Psoas muscle (tissue), 8 donors: ENCODE measurements at regions of chr9 and their contacts with region 1.

Region 1: DNA sequence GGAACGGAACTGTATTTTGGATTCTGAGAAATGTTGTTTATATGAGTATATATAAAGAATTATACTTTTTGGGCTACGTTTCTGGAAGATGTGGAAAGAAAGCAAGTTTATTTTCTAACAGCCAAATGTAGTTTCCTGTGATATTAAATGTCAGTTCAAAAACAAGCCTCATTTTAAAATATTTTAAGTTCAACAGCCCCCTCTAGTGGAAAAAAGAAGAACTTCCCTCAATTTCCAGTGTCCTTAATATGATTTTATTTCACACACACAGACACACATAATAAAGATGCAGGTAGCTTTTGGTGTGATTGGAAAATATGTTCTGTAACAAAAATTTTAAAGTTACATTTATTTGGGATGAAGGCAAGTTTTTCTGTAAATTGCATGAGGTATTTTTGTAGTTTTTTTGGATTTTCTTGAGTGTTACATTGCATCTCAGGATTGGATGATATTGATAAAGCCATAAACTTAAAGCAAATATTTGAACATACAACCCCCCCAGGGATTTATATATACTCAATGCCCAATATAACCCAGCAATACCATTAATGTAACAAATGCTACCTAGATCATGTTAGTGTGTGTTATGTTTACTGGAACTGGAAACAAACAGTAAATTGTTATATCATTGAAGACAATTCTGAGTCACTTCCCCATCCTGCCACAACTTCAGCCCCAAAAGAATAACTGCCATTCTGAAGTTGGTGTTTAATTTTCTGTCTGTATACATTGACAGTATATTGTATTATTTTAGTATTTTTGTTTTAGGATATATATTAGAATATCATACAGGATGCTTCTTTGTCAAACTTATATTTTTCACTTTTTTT is 54.0 kb downstream of the CCDC171 start:
- DNase-seq: no peak
- ATAC-seq: peak in 2 of 4 donors; percentile 40 to 70
- H3K4me3 ChIP-seq: no peak overlapping the region
- H3K27ac ChIP-seq: no peak overlapping the region
- H3K4me1 ChIP-seq: no peaks in the 10 kb centered on the region
- H3K27me3 ChIP-seq: no peaks in the 10 kb centered on the region
- CTCF ChIP-seq: peak; percentile 83

Region 2: DNA sequence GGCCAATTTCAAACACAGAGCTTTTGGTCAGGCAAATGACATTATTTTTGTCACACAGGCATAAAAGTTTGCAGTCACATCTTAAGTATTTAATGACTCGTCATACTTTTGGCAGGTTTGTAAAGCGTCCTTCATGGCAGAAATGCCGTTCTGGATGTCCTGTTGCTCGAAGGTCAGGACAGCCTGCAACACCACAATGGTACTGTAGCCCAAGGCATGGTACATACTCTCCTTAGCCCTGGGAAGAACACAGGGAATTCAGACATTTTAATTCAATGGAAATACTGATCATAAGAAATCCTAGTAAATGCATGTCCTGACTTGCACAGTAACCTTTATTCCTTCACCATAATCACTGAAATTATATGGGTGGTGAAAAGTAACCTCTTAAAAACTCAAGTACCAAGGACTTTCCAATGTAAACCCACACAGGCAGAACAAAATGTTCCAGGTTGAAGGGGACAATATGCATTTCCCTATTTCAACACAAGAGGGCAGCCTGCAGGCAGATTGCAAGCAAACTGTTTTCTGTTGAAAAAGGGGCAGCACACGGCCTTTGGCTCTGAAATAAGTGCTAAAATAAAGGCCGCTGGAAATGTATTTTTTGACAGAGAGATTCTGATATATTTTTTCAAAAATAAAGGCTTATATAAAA is 395.6 kb before region 1 on chr9:
- intact Hi-C with region 1: loop called (anchors 5 kb)
- DNase-seq: no peak
- ATAC-seq: peak; percentile 57 to 81 (median 60)
- H3K4me3 ChIP-seq: peak overlapping the region; percentile 12
- H3K27ac ChIP-seq: no peak overlapping the region
- H3K4me1 ChIP-seq: no peaks in the 10 kb centered on the region
- H3K27me3 ChIP-seq: no peaks in the 10 kb centered on the region
- CTCF ChIP-seq: peak; percentile 86

Region 3: DNA sequence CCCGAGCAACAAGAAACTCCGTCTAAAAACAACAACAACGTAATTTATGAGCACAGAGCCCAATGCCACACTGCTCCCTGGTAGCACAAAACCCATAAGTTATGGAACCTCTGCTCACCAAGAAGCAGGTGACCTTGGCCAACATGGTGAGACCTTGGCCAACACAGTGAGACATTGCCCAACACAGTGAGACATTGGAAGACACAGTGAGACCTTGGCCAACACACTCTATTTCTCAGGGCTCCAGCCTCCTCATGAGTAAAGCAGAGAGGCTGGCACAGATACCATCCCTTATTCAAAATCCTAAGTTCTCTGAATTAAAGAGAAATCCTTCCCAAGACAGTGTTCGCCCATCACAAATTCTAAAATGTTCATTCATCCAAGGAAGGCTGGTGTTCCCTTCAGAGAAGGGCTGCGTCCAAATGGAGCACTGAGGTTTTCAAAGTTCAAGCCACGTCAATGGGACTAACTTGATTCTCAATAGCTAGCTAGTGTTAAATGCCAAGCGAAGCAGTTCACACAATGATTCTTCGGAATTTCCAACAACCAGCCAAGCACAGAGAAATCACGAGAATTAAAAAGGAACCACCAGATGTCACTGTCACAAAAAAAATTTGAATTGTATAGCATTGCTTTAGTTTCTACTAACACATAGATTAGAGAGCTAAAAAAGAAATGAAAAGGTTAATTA is 329.3 kb before region 1 on chr9:
- intact Hi-C with region 1: loop called (anchors 5 to 10 kb)
- DNase-seq: no peak
- ATAC-seq: peak in 2 of 4 donors; percentile 13 to 70
- H3K4me3 ChIP-seq: no peak overlapping the region
- H3K27ac ChIP-seq: no peak overlapping the region
- H3K4me1 ChIP-seq: no peaks in the 10 kb centered on the region
- H3K27me3 ChIP-seq: no peaks in the 10 kb centered on the region
- CTCF ChIP-seq: peak; percentile 44

Region 4: DNA sequence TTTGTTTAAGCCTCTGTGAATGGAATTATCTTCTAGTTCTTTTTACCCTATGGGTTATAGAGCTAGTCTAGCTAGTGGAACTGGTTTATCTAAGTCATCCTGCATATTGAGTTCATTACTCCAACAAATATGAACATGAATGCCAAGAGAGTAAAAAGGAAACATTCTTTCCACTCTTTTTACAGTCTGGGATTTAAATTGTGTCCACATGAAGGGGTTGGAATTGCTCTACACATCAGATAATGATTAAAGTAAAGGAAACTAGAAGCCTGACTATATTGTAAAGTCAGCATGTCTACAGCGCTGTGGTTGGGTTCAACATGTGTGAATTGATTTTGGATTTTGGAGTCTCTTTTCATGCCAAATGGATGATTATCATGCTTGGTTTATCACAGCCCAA is 119.1 kb after region 1 on chr9:
- intact Hi-C with region 1: no loop called
- DNase-seq: no peak
- ATAC-seq: no peak
- H3K4me3 ChIP-seq: no peak overlapping the region
- H3K27ac ChIP-seq: no peak overlapping the region
- H3K4me1 ChIP-seq: no peaks in the 10 kb centered on the region
- H3K27me3 ChIP-seq: no peaks in the 10 kb centered on the region
- CTCF ChIP-seq: no peak

Region 5: GRCh38 chr9:15889555-15889954 is 282.7 kb after region 1 on chr9:
- intact Hi-C with region 1: no loop called
- DNase-seq: no peak
- ATAC-seq: no peak
- H3K4me3 ChIP-seq: no peak overlapping the region
- H3K27ac ChIP-seq: no peak overlapping the region
- H3K4me1 ChIP-seq: no peaks in the 10 kb centered on the region
- H3K27me3 ChIP-seq: no peaks in the 10 kb centered on the region
- CTCF ChIP-seq: no peak